ENCODE measurements at regions of chr20 and their contacts with region 1.

Region 1: DNA sequence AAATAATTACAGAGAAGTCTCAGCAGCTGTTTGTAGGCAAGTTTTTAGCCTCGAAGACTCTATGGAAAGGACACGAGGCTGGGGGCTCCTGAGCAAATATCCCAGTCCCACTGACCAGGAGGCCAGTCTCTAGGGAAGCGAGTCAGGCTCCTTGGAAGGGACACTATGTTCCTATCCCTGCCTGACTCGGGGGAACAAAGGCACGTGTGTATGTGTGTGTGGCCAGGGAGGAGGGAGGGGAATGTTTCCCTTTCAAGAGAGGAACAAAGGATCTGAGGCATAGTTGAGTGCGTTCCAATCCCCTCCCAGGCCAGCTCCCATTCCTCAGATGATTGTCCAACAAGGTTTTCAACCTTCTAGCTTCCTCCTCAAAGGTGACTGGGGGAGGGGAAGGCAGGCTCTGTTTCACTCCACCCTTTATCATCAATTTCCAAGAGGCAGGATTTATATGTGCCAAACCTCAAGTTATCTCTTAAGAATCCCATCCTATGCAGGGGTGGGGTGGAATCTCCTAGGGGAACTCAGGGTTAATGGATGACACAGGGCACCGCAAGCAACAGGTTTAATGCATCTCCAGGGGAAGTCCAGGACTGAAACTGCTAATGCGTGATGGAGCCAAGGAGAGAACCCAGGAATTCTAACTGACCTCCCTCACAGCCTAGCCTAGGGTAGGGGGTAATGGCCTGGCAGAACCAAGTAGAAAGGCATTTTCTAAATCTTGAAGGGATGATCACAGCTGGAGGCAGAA is 9.9 kb downstream of the BCL2L1 start:
- DNase-seq: no peak
- H3K4me3 Mint-ChIP-seq: peak overlapping the region; percentile 24
- H3K27ac Mint-ChIP-seq: peak overlapping the region; percentile 88
- H3K4me1 Mint-ChIP-seq: peaks cover 93% of the 10 kb centered on the region
- H3K27me3 Mint-ChIP-seq: no peaks in the 10 kb centered on the region

Region 2: GRCh38 chr20:31674895-31675827 is 37.6 kb before region 1 on chr20:
- CTCF ChIA-PET with region 1: interaction called, 32 read pairs
- POLR2A ChIA-PET with region 1: interaction called, 30 read pairs
- intact Hi-C with region 1: loop called (anchors 1 kb)
- DNase-seq: peak; percentile 86
- H3K4me3 Mint-ChIP-seq: peak overlapping the region; percentile 78
- H3K27ac Mint-ChIP-seq: peak overlapping the region; percentile 92
- H3K4me1 Mint-ChIP-seq: peaks cover 76% of the 10 kb centered on the region
- H3K27me3 Mint-ChIP-seq: no peaks in the 10 kb centered on the region

Region 3: DNA sequence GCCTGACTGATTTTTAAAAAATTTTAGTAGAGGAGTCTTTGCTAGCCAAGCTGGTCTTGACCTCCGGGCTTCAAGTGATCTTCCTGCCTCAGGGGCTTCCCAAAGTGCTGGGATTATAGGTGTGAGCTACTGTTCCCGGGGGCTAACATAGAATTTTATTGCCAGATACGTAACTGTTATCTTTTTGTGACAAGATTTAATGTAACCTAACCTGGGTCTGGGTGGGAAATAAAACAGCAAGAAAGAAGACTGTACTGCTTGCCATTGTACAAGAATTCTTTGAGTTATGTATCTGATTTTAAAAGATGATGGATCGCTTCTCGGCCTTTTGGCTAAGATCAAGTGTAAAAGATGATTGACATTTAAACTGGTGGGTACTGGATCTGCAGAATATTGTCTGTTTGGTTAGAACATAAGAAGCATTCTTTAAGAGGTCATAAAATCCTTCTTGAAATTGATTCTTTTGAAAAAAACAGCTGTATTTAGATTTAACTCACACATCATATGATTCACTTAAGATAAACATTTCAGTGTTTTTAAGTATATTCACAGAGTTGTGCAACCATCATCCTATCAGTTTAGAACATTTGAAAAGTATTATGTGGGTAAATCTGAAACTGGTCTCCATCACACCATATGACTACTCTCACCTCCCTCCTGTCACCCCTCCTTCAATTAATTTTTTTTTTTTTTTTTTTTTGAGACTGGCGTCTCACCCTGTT is 47.9 kb after region 1 on chr20:
- CTCF ChIA-PET with region 1: no interaction called
- POLR2A ChIA-PET with region 1: no interaction called
- intact Hi-C with region 1: no loop called
- DNase-seq: no peak
- H3K4me3 Mint-ChIP-seq: no peak overlapping the region
- H3K27ac Mint-ChIP-seq: no peak overlapping the region
- H3K4me1 Mint-ChIP-seq: peaks cover 2% of the 10 kb centered on the region
- H3K27me3 Mint-ChIP-seq: no peaks in the 10 kb centered on the region

Region 4: DNA sequence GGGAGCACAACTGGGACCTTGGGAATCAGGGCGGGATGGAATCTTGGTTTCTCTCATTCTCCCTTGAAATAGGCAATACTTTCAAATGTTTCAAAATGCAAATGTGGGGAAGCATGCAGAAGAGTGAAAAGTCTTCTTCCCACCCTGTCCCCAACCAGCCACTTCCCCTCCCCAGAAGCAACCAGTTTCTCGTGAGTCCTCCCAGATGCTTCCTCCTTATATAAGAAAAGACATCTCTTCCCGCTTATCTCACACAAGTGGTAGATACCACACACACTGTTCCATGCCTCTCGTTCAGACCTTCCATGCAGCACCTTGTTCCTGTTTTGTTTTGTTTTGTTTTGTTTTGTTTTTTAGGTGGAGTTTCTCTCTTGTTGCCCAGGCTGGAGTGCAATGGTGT is 364.5 kb after region 1 on chr20:
- CTCF ChIA-PET with region 1: no interaction called
- POLR2A ChIA-PET with region 1: no interaction called
- intact Hi-C with region 1: no loop called
- DNase-seq: no peak
- H3K4me3 Mint-ChIP-seq: no peak overlapping the region
- H3K27ac Mint-ChIP-seq: no peak overlapping the region
- H3K4me1 Mint-ChIP-seq: no peaks in the 10 kb centered on the region
- H3K27me3 Mint-ChIP-seq: peaks cover 6% of the 10 kb centered on the region

Measured in activated CD4-positive, alpha-beta memory T cell treated with anti-CD3 and anti-CD28 coated beads for 36 hours (primary cell).